ENCODE measurements at regions of chr20 and their contacts with region 1.

Region 1: DNA sequence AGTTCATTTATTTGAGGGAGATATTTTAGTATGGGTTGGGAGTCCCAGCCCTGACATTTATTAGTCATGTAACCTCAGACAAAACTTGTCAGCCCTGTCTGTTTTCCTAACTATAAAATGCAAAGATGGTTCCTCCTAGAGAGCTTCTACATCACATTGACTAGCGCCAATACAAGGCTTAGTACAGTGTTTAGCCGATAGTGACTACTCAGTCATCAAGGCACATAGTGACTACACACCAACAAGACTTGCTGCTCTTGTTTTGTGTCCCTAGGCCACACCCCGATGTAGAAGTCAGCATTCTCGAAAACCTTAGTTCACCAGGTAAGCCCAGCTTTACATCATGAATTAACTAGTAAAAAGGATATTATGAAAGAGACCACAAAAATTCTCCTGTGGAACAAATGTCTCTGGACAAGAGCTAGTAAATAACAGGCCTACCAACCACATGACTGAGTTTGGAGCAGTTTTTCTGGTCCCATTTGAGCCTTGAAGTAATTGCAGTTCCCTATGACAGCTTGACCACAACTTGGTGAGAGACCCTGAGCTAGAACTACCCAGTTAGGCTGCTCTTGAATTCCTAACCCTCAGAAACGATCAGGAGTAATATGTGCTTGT is 68.8 kb downstream of the PFDN4 start:
- DNase-seq: no peak
- H3K4me3 ChIP-seq: no peak overlapping the region
- H3K27ac ChIP-seq: no peak overlapping the region
- H3K4me1 ChIP-seq: no peaks in the 10 kb centered on the region
- H3K27me3 ChIP-seq: no peaks in the 10 kb centered on the region
- CTCF ChIP-seq: no peak

Region 2: DNA sequence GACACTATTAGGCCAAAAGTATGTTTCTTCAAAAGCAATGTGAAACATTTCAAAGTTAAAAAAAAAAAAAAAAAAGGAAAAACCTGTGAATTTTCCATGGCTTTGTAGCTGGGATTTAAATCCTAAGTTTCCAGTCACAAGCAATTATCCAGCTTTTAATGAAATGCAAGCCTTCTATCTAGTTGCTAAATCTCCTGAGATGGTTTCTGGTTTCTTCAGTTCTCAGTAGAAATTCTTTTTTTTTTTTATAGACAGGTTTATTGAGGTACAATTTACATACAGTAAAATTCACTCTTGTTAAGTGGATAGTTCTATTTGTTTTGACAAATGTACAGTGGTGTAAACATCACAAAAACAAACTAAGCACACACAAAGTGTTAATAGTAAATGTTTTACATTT is 23.7 kb before region 1 on chr20:
- CTCF ChIA-PET with region 1: no interaction called
- POLR2A ChIA-PET with region 1: interaction called, 12 read pairs
- intact Hi-C with region 1: no loop called
- DNase-seq: no peak
- H3K4me3 ChIP-seq: no peak overlapping the region
- H3K27ac ChIP-seq: no peak overlapping the region
- H3K4me1 ChIP-seq: no peaks in the 10 kb centered on the region
- H3K27me3 ChIP-seq: no peaks in the 10 kb centered on the region
- CTCF ChIP-seq: no peak